ENCODE measurements at regions of chr16 and their contacts with region 1.

Region 1: DNA sequence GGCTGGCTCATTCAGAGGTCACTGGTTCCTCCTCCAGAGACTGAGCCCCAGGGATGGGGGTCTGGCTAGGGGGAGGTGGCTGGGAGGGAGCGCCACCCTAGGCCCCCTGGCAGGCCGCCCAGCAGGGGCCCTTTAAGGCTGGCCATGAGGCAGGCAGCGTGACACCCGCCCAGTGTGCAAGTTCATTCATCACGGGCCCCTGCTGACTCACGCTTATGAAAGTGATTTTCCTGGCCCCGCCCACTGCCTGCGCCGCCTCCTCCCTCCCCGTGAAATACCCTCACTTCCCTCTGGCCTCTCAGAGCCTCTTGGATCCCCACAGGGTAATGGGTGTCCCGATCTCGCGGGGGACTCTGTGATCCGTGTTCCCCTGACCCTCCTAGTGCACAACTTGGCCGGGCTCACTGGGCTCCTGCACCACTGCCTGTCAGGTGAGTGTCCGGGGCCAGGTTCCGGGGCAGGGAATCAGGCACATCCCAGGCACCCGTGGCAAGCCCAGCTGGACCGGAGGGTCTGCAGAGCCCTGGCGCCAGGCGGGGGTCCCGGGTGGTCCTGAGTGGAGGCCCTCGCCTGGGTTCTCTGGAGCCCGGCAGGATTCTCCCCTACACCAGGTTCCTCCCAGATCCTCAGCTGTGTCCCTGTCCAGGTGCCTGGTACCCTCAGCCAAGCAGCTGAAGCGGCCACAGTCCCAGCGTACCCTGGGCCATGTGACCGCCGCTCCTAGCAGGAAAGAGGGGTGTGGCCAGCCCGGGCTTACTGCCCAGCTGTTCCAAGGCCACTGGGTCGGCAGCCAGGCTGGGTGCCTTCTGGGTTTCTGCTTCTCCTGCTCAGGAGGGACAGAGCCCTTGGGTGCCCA is at the start of gene OSGIN1:
- DNase-seq: no peak
- ATAC-seq: peak; percentile 18; the same call in 1 of the 2 replicates
- H3K4me3 Mint-ChIP-seq: peak within 1 kb of the TSS; percentile 53
- H3K27ac Mint-ChIP-seq: no peak within 1 kb of the TSS
- H3K4me1 Mint-ChIP-seq: peaks cover 8% of the 10 kb centered on the region
- H3K27me3 Mint-ChIP-seq: no peaks in the 10 kb centered on the region
- CTCF ChIP-seq: no peak
- total RNA-seq, gene OSGIN1: 0.73 to 1.7 TPM (median 1.1 TPM) in 3 replicates

Region 2: GRCh38 chr16:83926726-83927397 is 26.3 kb before region 1 on chr16:
- CTCF ChIA-PET with region 1: interaction called, 18 read pairs
- POLR2A ChIA-PET with region 1: no interaction called
- DNase-seq: peak; percentile 95
- ATAC-seq: peak; percentile 92
- H3K4me3 Mint-ChIP-seq: peak overlapping the region; percentile 68
- H3K27ac Mint-ChIP-seq: peak overlapping the region; percentile 98
- H3K4me1 Mint-ChIP-seq: peaks cover 26% of the 10 kb centered on the region
- H3K27me3 Mint-ChIP-seq: peaks cover 2% of the 10 kb centered on the region; the same call in 1 of the 2 replicates
- CTCF ChIP-seq: peak; percentile 86

Region 3: GRCh38 chr16:83942815-83943515 is 10.2 kb before region 1 on chr16:
- CTCF ChIA-PET with region 1: interaction called, 12 read pairs
- POLR2A ChIA-PET with region 1: no interaction called
- DNase-seq: no peak
- ATAC-seq: no peak
- H3K4me3 Mint-ChIP-seq: no peak overlapping the region
- H3K27ac Mint-ChIP-seq: no peak overlapping the region; the same call in 1 of the 2 replicates
- H3K4me1 Mint-ChIP-seq: peaks cover 7% of the 10 kb centered on the region; the same call in 1 of the 2 replicates
- H3K27me3 Mint-ChIP-seq: no peaks in the 10 kb centered on the region; the same call in 1 of the 2 replicates
- CTCF ChIP-seq: no peak

Region 4: DNA sequence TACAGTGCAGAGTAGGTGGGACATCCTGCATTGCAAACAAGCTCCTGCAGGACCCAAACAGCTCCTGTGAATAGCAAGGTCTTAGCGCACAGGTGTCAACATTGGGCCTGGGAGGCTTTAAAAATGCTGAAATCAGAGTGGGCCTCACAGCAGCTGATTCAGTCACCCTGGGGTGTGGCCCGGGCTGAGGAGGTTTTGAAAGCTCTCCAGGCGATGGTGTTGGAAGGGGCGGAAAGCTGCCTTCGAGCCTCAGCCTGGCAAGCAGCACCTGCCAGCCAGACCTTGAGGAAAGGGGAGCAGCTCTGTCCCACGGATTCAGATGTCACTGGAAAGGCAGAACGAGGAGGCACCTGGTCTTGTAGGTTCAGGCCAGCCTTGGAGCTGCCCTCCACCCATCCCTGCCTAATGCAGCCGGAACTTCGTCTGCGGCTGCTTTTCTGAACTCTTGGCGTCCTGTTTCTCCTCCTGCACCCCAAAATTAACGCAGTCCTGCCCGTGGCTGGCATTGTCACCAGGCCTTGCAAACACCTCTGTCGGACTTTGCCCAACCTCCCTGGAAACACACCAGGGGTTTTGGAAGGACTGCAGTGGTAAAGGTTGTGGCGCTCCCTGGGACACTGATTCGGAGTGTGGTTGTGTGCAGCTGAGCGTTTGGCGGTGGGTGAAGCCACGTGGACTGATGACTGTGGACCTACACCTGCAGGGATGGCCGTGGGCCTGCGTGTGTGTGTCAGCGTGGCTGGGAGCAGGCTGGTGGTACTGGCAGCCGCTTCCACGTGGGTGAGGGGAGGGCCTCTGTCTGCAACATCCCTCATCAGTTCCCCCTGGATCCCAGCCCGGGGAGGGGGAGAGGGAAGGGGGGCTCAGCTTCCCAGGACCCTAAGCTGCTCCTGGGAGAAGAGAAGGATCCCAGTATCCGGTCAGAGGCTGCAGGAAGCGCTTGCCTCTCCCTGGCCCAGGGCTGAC is 18.3 kb after region 1 on chr16:
- CTCF ChIA-PET with region 1: interaction called, 36 read pairs
- POLR2A ChIA-PET with region 1: no interaction called
- DNase-seq: no peak
- ATAC-seq: no peak
- H3K4me3 Mint-ChIP-seq: no peak overlapping the region
- H3K27ac Mint-ChIP-seq: no peak overlapping the region
- H3K4me1 Mint-ChIP-seq: peaks cover 7% of the 10 kb centered on the region
- H3K27me3 Mint-ChIP-seq: peaks cover 12% of the 10 kb centered on the region
- CTCF ChIP-seq: no peak

Region 5: DNA sequence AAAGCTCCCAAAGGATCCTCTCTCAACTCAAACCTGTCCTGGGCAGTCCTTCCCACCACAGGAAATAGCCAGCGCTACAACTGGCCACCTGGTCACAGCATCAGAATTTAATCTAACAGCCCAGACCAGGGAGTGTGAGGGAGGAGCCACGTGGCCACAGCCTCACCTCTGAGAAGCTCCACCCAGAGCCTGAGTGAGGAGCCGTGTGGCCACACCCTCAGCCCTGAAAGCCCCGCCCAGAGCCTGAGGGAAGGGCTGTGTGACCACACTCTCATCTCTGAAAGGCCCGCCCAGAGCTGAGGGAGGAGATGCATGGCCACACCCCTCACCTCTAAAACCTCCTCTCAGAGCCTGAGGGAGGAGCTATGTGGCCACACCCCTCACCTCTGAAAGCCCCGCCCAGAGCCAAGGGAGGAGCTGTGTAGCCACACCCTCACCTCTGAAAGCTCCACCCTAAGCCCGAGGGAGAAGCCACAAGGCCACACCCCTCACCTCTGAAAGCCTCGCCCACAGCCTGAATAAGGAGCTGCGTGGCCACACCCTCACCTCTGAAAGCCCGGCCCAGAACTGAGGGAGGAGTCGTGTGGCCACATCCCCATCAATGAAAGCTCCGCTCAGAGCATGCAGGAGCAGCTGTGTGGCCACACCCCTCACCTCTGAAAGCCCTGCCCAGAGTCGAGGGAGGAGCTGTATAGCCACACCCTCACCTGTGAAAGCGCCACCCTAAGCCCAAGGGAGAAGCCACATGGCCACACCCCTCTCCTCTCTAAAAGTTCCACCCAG is 60.8 kb after region 1 on chr16:
- CTCF ChIA-PET with region 1: interaction called, 19 read pairs
- POLR2A ChIA-PET with region 1: interaction called, 4 read pairs
- DNase-seq: peak; percentile 100
- ATAC-seq: peak; percentile 90
- H3K4me3 Mint-ChIP-seq: peak overlapping the region; percentile 56
- H3K27ac Mint-ChIP-seq: peak overlapping the region; percentile 41; the same call in 1 of the 2 replicates
- H3K4me1 Mint-ChIP-seq: peaks cover 6% of the 10 kb centered on the region
- H3K27me3 Mint-ChIP-seq: peaks cover 5% of the 10 kb centered on the region; the same call in 1 of the 2 replicates
- CTCF ChIP-seq: no peak

Region 6: DNA sequence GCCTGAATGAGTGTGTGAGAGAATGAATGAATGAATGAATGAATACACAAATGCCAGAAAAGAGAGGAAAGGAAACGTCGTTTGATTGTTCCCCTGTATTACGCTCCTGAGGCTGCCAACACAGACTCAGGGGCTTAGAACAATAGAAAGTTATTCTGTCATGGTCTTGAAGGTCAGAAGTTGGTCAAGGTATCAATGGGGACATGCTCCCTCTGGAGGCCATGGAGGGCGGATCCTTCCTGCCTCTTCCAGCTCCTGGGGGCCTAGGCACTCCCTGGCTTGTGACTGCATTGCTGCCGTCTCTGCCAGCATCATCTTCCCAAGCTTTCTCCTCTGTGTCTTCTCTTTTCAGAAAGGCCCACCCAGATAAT is 90.9 kb after region 1 on chr16:
- CTCF ChIA-PET with region 1: interaction called, 131 read pairs
- POLR2A ChIA-PET with region 1: no interaction called
- DNase-seq: peak; percentile 54
- ATAC-seq: peak; percentile 60
- H3K4me3 Mint-ChIP-seq: no peak overlapping the region
- H3K27ac Mint-ChIP-seq: no peak overlapping the region
- H3K4me1 Mint-ChIP-seq: peaks cover 17% of the 10 kb centered on the region
- H3K27me3 Mint-ChIP-seq: no peaks in the 10 kb centered on the region
- CTCF ChIP-seq: peak; percentile 20; the same call in 1 of the 2 replicates

Region 7: DNA sequence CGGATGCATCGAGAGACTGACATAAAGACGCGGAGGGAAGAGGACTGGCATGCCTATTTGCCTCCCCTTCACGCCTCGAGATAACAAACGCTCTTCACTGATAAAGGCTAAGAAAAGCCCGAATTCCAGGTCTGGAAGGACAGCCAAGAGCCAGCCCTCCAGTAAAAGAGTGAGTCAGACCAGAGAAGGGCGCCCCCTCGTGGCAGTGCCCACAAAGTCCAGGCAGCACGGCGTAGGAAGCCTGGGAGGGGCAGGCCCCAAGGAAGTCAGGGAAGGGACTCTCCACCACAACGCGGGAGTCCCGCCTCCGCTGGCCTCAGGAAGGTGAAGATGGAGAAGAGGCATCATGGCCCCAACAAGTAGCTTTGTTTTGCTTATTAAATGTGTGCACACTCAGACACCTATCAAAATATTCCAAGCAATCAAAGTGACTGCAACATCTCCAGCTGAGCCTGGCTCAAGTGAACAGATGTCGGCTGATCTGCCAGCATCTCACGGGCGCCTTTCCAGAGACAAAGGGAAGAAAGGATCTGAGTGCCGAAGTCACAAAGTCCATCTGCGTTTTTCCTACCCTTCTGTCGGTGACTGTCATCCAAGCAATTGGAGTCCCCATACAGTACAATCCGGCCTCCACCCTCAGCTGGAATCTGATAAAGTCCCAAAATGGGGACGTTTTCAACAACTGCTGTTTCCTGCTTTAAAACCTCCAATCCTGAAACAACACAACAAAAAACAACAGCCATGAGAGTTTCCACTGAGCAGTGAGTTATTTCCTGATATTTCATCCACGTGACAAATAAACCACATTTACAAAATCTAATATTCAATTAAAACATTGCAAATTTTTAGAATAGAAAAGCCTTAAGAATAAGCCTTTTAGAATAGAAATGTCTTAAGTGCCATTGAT is 109.8 kb after region 1 on chr16:
- CTCF ChIA-PET with region 1: interaction called, 42 read pairs
- POLR2A ChIA-PET with region 1: no interaction called
- DNase-seq: peak; percentile 94
- ATAC-seq: peak; percentile 99
- H3K4me3 Mint-ChIP-seq: no peak overlapping the region
- H3K27ac Mint-ChIP-seq: peak overlapping the region; percentile 86
- H3K4me1 Mint-ChIP-seq: peaks cover 9% of the 10 kb centered on the region
- H3K27me3 Mint-ChIP-seq: no peaks in the 10 kb centered on the region
- CTCF ChIP-seq: peak; percentile 92